CD8-positive, alpha-beta memory T cell (primary cell): ENCODE measurements at regions of chr3 and their contacts with region 1.

Region 1: GRCh38 chr3:196867507-196868296 is at the start of gene SENP5:
- DNase-seq: peak; percentile 85 to 91 (median 86)
- H3K4me3 ChIP-seq: peak within 1 kb of the TSS; percentile 86
- H3K4me3 Mint-ChIP-seq: peak within 1 kb of the TSS; percentile 93 to 98 (median 95)
- H3K27ac ChIP-seq: peak within 1 kb of the TSS; percentile 76
- H3K27ac Mint-ChIP-seq: peak within 1 kb of the TSS; percentile 92 to 99 (median 98)
- H3K4me1 ChIP-seq: peaks cover 16% of the 10 kb centered on the region
- H3K4me1 Mint-ChIP-seq: peaks cover 26 to 35% (median 30%) of the 10 kb centered on the region in 3 donors
- H3K27me3 ChIP-seq: no peaks in the 10 kb centered on the region
- H3K27me3 Mint-ChIP-seq: no peaks in the 10 kb centered on the region
- total RNA-seq, gene SENP5: 39.6 to 40.9 TPM

Region 2: GRCh38 chr3:196568246-196569002 is 299.3 kb before region 1 on chr3 and contains the starts of genes FBXO45 and WDR53:
- CTCF ChIA-PET with region 1: no interaction called
- POLR2A ChIA-PET with region 1: interaction called, 13 read pairs
- DNase-seq: peak; percentile 92 to 97 (median 96)
- H3K4me3 ChIP-seq: peak within 1 kb of the TSS; percentile 93
- H3K4me3 Mint-ChIP-seq: peak within 1 kb of the TSS; percentile 95 to 99 (median 98)
- H3K27ac ChIP-seq: peak within 1 kb of the TSS; percentile 91
- H3K27ac Mint-ChIP-seq: peak within 1 kb of the TSS; percentile 94 to 99 (median 98)
- H3K4me1 ChIP-seq: peaks cover 36% of the 10 kb centered on the region
- H3K4me1 Mint-ChIP-seq: peaks cover 35 to 48% (median 45%) of the 10 kb centered on the region in 3 donors
- H3K27me3 ChIP-seq: no peaks in the 10 kb centered on the region
- H3K27me3 Mint-ChIP-seq: no peaks in the 10 kb centered on the region
- total RNA-seq, gene FBXO45: 29.3 to 30.1 TPM
- total RNA-seq, gene WDR53: 26.7 to 28.8 TPM

Region 3: GRCh38 chr3:196739671-196740480 is 127.8 kb before region 1 on chr3 and contains the start of gene PAK2:
- CTCF ChIA-PET with region 1: no interaction called
- POLR2A ChIA-PET with region 1: interaction called, 18 read pairs
- DNase-seq: peak; percentile 83 to 91 (median 88)
- H3K4me3 ChIP-seq: peak within 1 kb of the TSS; percentile 72
- H3K4me3 Mint-ChIP-seq: peak within 1 kb of the TSS; percentile 91 to 100 (median 99)
- H3K27ac ChIP-seq: peak within 1 kb of the TSS; percentile 82
- H3K27ac Mint-ChIP-seq: peak within 1 kb of the TSS; percentile 90 to 100 (median 98)
- H3K4me1 ChIP-seq: peaks cover 23% of the 10 kb centered on the region
- H3K4me1 Mint-ChIP-seq: peaks cover 33 to 42% (median 38%) of the 10 kb centered on the region in 3 donors
- H3K27me3 ChIP-seq: no peaks in the 10 kb centered on the region
- H3K27me3 Mint-ChIP-seq: no peaks in the 10 kb centered on the region
- total RNA-seq, gene PAK2: 81.2 to 85.4 TPM

Region 4: DNA sequence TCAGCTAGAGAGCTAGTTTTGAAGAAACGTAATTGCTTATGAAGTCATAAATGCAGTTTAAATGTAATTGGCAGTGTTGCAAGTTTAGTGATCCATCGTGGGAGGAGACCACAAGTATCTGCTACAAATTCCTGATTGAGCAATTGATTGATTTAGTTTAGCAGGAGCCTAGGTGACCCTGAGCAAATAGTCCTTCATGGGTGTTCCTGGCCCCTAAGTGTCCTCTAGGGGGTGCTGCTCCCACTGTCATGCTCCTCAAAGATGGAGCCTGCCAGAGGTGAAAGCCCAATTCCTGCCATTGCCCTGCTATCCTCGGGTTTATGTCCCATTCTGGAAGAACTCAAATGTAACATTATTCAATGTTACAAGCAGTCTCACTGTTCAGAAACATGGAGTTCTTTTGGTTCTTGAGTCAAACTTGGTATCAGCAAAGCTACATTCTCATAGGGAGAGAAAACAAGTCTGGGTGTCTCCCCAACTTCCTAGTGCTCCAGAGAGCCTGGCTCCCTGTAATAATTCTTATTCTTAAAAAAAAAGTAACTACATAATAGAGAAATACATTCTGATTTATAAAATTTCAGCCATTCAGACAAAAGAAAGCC is 29.8 kb before region 1 on chr3:
- CTCF ChIA-PET with region 1: interaction called, 11 read pairs
- POLR2A ChIA-PET with region 1: interaction called, 3 read pairs
- DNase-seq: peak; percentile 59 to 82 (median 62)
- H3K4me3 ChIP-seq: no peak overlapping the region
- H3K4me3 Mint-ChIP-seq: no peak overlapping the region
- H3K27ac ChIP-seq: no peak overlapping the region
- H3K27ac Mint-ChIP-seq: peak overlapping the region in 1 of 8 donors; percentile 5
- H3K4me1 ChIP-seq: no peaks in the 10 kb centered on the region
- H3K4me1 Mint-ChIP-seq: peaks cover 0 to 3% (median 2%) of the 10 kb centered on the region in 3 donors
- H3K27me3 ChIP-seq: no peaks in the 10 kb centered on the region
- H3K27me3 Mint-ChIP-seq: no peaks in the 10 kb centered on the region

Region 5: GRCh38 chr3:196942226-196942914 is 74.7 kb after region 1 on chr3 and contains the start of gene NCBP2:
- CTCF ChIA-PET with region 1: interaction called, 22 read pairs
- POLR2A ChIA-PET with region 1: interaction called, 46 read pairs
- DNase-seq: peak; percentile 98 to 99 (median 99)
- H3K4me3 ChIP-seq: peak within 1 kb of the TSS; percentile 97
- H3K4me3 Mint-ChIP-seq: peak within 1 kb of the TSS; percentile 91 to 98 (median 97)
- H3K27ac ChIP-seq: peak within 1 kb of the TSS; percentile 96
- H3K27ac Mint-ChIP-seq: peak within 1 kb of the TSS; percentile 93 to 98 (median 98)
- H3K4me1 ChIP-seq: peaks cover 23% of the 10 kb centered on the region
- H3K4me1 Mint-ChIP-seq: peaks cover 38 to 51% (median 45%) of the 10 kb centered on the region in 3 donors
- H3K27me3 ChIP-seq: no peaks in the 10 kb centered on the region
- H3K27me3 Mint-ChIP-seq: peaks cover 0 to 1% of the 10 kb centered on the region in 2 donors
- total RNA-seq, gene NCBP2: 127 to 131 TPM

Region 6: DNA sequence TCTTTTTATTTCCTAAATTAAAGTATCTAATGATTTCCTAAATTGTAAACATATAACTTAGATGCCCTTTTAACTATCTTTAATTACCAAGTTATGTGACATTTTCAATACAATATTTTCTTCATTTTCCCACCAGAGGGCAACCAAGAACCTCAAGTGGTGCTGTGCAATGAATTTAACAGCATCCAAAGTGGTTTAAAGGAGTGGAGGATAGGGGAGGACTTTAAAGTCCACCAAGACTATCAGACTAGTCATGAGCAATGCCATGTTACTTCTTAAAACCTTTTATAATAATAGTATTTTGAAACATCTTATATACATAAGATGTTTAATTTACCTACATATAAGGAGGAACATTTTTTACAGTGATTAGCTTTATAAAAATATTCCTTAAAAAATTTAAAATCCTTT is 356.3 kb after region 1 on chr3:
- CTCF ChIA-PET with region 1: no interaction called
- POLR2A ChIA-PET with region 1: no interaction called
- DNase-seq: peak in 2 of 5 donors; percentile 5 to 17
- H3K4me3 ChIP-seq: no peak overlapping the region
- H3K4me3 Mint-ChIP-seq: no peak overlapping the region
- H3K27ac ChIP-seq: no peak overlapping the region
- H3K27ac Mint-ChIP-seq: peak overlapping the region in 1 of 8 donors; percentile 33
- H3K4me1 ChIP-seq: peaks cover 3% of the 10 kb centered on the region
- H3K4me1 Mint-ChIP-seq: peaks cover 37 to 66% (median 54%) of the 10 kb centered on the region in 3 donors
- H3K27me3 ChIP-seq: no peaks in the 10 kb centered on the region
- H3K27me3 Mint-ChIP-seq: no peaks in the 10 kb centered on the region